ENCODE measurements at regions of chr19 and their contacts with region 1.

Region 1: DNA sequence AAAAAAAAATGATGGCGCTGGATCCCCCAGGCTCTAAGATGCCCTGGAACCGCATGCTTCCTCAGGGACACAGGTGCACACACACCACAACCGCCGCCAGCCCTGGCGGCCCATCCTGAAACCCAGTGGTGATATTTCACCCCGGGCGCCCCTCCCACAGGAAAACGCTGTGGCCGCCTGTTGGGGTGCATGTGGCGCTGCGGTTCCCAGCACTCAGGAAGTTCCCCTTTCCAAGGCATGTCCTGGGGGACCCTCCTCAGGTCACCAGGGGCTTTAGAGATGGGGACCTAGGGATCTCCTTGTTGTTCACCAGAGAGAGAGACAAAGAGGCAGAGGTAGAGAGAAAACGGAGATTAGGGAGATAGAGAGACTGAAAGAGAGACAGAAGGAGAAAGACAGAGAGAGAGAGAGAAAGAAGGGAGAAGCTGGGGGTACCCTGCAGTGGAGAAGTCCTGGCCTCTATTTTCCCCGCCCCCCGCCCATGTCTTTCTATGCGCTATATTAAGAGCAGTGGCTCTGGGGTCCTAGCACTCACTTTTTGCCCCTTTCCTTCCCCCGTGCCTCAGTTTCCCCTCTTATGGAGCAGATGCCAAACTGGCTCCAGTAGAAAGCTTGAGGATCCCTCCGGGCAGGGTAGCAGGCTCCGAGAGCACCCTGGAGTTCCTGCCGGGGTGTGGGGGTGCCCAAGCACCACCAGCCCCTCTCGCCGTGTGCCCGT is 2.3 kb downstream of the ADGRE2 start:
- DNase-seq: peak; percentile 67 to 86 (median 73)
- H3K4me3 ChIP-seq: peak overlapping the region; percentile 16 to 86 (median 75)
- H3K27ac ChIP-seq: peak overlapping the region; percentile 12 to 79
- H3K4me1 ChIP-seq: peaks cover 0 to 30% (median 26%) of the 10 kb centered on the region in 4 experiments
- H3K27me3 ChIP-seq: no peaks in the 10 kb centered on the region

Region 2: DNA sequence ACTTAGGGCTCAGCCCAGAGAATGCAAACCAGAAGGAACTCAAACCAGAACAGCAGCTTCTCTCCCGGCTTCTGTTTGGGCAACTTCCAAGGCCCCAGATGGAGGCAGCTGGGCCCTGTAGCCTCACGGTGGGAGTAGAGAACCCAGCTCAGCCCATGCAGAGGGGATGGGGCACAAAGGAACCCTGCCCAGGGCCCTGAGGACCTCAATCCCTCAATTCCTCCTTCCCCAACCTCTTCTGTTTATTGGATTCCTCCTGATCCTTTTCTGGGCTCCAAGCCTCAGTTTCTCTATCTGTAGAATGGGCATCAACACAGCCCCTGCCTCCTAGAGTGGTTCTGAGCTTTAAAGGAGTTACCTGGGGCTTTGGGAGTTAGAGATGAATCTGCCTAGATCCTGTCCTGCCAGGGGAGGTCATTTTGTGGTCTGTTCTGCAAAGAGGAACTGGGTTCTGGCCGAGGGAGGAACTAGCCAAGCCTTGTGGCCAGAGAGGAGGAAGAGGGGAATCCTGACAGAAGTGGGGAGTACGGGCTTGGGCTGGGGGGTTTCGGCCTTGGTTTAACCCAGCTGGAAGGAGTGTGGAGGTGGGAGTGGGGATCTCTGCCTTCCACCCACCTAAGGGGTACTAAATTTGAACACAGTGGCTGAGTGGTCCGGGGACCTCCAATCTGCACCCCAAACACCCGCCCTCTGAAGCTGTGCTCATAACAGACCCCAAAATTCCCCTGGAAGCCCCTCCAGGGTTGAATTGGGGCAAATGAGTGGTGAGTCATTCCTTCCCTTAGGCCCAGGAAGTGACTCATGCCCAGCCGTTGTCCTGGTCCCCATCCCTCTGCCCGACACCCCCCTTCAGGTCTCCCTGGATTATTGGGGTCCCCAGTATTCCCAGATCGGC is 392.1 kb before region 1 on chr19:
- CTCF ChIA-PET with region 1: no interaction called
- POLR2A ChIA-PET with region 1: interaction called, 10 read pairs
- DNase-seq: peak; percentile 65 to 88 (median 82)
- H3K4me3 ChIP-seq: peak overlapping the region; percentile 18 to 95 (median 58)
- H3K27ac ChIP-seq: peak overlapping the region; percentile 88 to 97
- H3K4me1 ChIP-seq: peaks cover 0 to 64% (median 59%) of the 10 kb centered on the region in 4 experiments
- H3K27me3 ChIP-seq: no peaks in the 10 kb centered on the region

Region 3: DNA sequence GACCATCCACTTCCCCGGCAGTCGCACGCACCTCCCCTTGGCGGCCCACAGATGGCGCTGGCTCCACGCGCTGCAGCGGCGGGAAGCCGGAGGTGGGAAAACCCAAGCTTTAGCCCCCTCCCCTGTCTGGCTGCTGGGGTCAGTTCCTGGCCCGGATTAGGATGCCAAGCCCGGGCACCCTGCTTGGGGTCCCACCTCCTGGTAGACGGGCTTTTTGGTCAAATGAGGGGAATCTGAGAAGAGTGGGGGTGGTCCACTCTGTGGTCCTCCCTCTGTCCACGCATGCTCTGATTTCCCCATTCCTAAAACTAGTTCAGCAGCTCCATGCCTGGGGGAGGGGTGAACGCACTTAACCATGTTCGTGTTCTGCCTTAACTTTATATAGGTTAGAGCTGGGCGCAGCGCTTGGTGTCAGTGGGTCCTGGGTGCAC is 10.4 kb after region 1 on chr19:
- CTCF ChIA-PET with region 1: interaction called, 32 read pairs
- POLR2A ChIA-PET with region 1: interaction called, 39 read pairs
- DNase-seq: peak; percentile 45 to 61 (median 59)
- H3K4me3 ChIP-seq: peak overlapping the region in 3 of 7 experiments; percentile 4 to 52 (median 18)
- H3K27ac ChIP-seq: peak overlapping the region in 1 of 2 experiments; percentile 14
- H3K4me1 ChIP-seq: peaks cover 30 to 65% (median 62%) of the 10 kb centered on the region in 4 experiments
- H3K27me3 ChIP-seq: no peaks in the 10 kb centered on the region

Measured in common myeloid progenitor, CD34-positive (primary cell).